CD8-positive, alpha-beta T cell (primary cell): ENCODE measurements at regions of chr3 and their contacts with region 1.

Region 1: DNA sequence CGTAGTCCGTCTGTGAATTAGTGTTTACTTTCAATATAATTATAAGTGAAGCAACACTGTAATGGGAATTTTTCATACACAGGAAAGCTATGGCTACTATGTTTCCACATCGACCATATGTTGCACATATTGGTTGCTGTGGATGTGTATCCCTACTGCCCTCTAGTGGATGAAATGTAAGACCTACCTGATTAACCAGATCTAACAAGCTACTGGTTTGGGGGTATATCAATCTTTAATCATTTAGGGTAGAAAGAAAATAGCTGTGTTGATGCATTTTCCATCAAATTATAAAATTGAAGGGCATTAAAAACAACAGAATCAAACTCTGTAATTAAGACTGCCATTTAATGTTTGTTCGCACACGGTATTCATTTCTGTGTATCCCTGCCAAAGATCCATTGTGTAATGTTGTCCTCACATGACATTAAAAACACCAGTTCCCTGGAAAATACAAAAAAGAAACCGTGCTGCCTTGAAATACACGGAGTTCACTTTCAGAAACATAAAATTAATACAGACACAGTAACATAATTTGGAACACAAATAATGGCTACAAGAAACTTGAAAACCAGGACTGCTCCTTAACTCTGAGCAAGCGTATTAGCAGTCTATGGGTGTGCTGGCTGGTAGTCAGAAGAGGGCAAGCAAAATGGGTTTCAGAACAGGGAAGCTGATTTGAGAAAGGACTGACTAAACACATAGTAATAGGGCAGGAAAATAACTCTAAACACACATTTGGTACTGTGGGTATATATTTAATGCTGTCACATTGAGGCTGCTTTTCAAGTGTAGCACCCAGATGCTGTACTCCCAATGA is 125.1 kb downstream of the TIGIT start:
- DNase-seq: peak in 3 of 9 experiments; percentile 6 to 83 (median 71)
- ATAC-seq: peak; percentile 83
- H3K4me3 ChIP-seq: no peak overlapping the region
- H3K4me3 Mint-ChIP-seq: no peak overlapping the region
- H3K27ac ChIP-seq: no peak overlapping the region
- H3K27ac Mint-ChIP-seq: no peak overlapping the region
- H3K4me1 ChIP-seq: no peaks in the 10 kb centered on the region
- H3K4me1 Mint-ChIP-seq: peaks cover 6% of the 10 kb centered on the region
- H3K27me3 ChIP-seq: no peaks in the 10 kb centered on the region
- H3K27me3 Mint-ChIP-seq: no peaks in the 10 kb centered on the region
- CTCF ChIP-seq: peak; percentile 93

Region 2: DNA sequence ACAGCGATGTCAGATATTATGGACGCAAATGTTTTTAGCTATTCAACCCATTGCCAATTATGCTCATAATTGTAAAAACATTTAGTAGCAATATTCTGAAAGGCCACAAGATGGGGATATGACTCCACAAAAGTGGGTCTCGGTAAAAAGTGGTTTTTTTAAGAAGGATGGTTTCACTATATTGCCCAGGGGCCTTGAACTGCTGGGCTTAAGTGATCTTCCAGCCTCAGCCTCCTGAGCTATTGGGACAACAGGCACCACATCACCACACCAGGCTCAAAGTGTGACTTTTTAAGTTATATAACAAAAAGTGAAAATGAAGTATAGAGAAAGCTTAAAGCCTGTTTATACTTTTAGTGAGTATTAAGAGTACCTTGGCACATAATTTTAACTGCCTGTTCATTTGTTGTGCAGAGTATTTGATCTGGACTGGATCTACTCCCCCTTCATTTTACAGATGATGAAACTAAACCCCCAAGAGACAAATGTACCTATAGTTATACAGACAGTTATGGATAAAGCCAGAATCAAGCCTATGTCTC is 682.3 kb before region 1 on chr3:
- CTCF ChIA-PET with region 1: no interaction called
- POLR2A ChIA-PET with region 1: no interaction called
- intact Hi-C with region 1: loop called (anchors 2 to 10 kb)
- DNase-seq: peak in 4 of 9 experiments; percentile 21 to 83 (median 54)
- ATAC-seq: peak; percentile 91
- H3K4me3 ChIP-seq: no peak overlapping the region
- H3K4me3 Mint-ChIP-seq: no peak overlapping the region
- H3K27ac ChIP-seq: peak overlapping the region in 1 of 2 experiments; percentile 53
- H3K27ac Mint-ChIP-seq: peak overlapping the region; percentile 84
- H3K4me1 ChIP-seq: peaks cover 16% of the 10 kb centered on the region
- H3K4me1 Mint-ChIP-seq: peaks cover 59% of the 10 kb centered on the region
- H3K27me3 ChIP-seq: no peaks in the 10 kb centered on the region
- H3K27me3 Mint-ChIP-seq: no peaks in the 10 kb centered on the region
- CTCF ChIP-seq: peak; percentile 73

Region 3: GRCh38 chr3:113844622-113845222 is 574.2 kb before region 1 on chr3:
- CTCF ChIA-PET with region 1: interaction called, 3 read pairs
- POLR2A ChIA-PET with region 1: no interaction called
- intact Hi-C with region 1: loop called (anchors 2 to 5 kb)
- DNase-seq: peak in 2 of 9 experiments; percentile 30 to 49
- ATAC-seq: no peak
- H3K4me3 ChIP-seq: no peak overlapping the region
- H3K4me3 Mint-ChIP-seq: no peak overlapping the region
- H3K27ac ChIP-seq: no peak overlapping the region
- H3K27ac Mint-ChIP-seq: no peak overlapping the region
- H3K4me1 ChIP-seq: no peaks in the 10 kb centered on the region
- H3K4me1 Mint-ChIP-seq: no peaks in the 10 kb centered on the region
- H3K27me3 ChIP-seq: no peaks in the 10 kb centered on the region
- H3K27me3 Mint-ChIP-seq: no peaks in the 10 kb centered on the region
- CTCF ChIP-seq: peak; percentile 60

Region 4: GRCh38 chr3:114290911-114291901 is 127.7 kb before region 1 on chr3:
- CTCF ChIA-PET with region 1: interaction called, 12 read pairs
- POLR2A ChIA-PET with region 1: interaction called, 5 read pairs
- intact Hi-C with region 1: loop called (anchors 1 to 2 kb)
- DNase-seq: peak; percentile 86 to 97 (median 93)
- ATAC-seq: peak; percentile 76
- H3K4me3 ChIP-seq: peak overlapping the region in 1 of 2 experiments; percentile 48
- H3K4me3 Mint-ChIP-seq: peak overlapping the region; percentile 80
- H3K27ac ChIP-seq: peak overlapping the region; percentile 60 to 89
- H3K27ac Mint-ChIP-seq: peak overlapping the region; percentile 96
- H3K4me1 ChIP-seq: peaks cover 27% of the 10 kb centered on the region
- H3K4me1 Mint-ChIP-seq: peaks cover 43% of the 10 kb centered on the region
- H3K27me3 ChIP-seq: no peaks in the 10 kb centered on the region
- H3K27me3 Mint-ChIP-seq: no peaks in the 10 kb centered on the region
- CTCF ChIP-seq: peak; percentile 87

Region 5: GRCh38 chr3:114344492-114344891 is 74.4 kb before region 1 on chr3:
- CTCF ChIA-PET with region 1: no interaction called
- POLR2A ChIA-PET with region 1: no interaction called
- intact Hi-C with region 1: loop called in 1 of 2 experiments (anchors 5 kb)
- DNase-seq: no peak
- ATAC-seq: no peak
- H3K4me3 ChIP-seq: no peak overlapping the region
- H3K4me3 Mint-ChIP-seq: no peak overlapping the region
- H3K27ac ChIP-seq: no peak overlapping the region
- H3K27ac Mint-ChIP-seq: no peak overlapping the region
- H3K4me1 ChIP-seq: no peaks in the 10 kb centered on the region
- H3K4me1 Mint-ChIP-seq: peaks cover 12% of the 10 kb centered on the region
- H3K27me3 ChIP-seq: no peaks in the 10 kb centered on the region
- H3K27me3 Mint-ChIP-seq: no peaks in the 10 kb centered on the region
- CTCF ChIP-seq: no peak

Region 6: GRCh38 chr3:114393367-114394072 is 25.4 kb before region 1 on chr3:
- CTCF ChIA-PET with region 1: interaction called, 14 read pairs
- POLR2A ChIA-PET with region 1: no interaction called
- intact Hi-C with region 1: no loop called
- DNase-seq: no peak
- ATAC-seq: no peak
- H3K4me3 ChIP-seq: no peak overlapping the region
- H3K4me3 Mint-ChIP-seq: no peak overlapping the region
- H3K27ac ChIP-seq: no peak overlapping the region
- H3K27ac Mint-ChIP-seq: no peak overlapping the region
- H3K4me1 ChIP-seq: peaks cover 6% of the 10 kb centered on the region
- H3K4me1 Mint-ChIP-seq: peaks cover 28% of the 10 kb centered on the region
- H3K27me3 ChIP-seq: no peaks in the 10 kb centered on the region
- H3K27me3 Mint-ChIP-seq: no peaks in the 10 kb centered on the region
- CTCF ChIP-seq: no peak